Natural killer cell (primary cell): ENCODE measurements at regions of chr19 and their contacts with region 1.

Region 1: DNA sequence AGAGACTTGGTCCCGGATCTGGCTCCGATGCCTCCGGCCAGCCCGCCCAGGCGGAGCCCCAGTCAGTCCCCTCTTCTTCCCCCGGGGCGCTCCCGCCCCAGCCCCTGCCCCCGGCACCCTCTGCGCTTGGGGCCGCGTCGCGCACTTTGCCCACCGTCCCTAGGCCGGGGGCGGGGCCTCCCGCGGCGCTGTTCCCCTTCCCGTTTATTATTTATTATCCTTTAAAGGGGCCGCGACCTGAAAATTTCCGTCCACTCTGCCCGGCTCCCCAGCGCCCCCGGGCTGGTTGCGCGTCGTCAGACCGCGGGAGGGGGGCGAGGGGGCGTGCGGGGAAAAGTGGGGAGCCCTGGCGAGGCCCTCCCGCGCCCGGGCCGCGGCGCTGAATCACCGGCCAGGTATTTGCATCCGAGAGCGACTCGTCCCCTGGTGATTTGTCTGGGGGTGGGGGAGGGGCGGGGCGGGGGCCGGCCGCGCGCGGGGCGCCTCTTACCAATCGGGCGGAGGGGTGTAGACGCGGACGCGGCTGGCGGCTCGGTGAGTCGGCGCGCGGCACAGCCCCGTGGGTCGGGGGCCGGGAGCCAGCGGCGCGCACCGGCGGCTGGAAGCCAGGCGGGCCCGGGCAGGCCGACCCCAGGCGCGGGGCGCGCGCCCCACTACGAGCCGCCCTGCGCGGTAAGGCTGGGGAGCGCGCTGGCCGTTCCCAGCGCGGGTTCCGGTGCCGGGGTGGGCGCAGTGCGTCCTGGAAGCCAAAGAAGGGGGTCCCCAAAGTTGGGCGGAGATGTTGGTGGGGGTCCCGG is at the start of gene ARID3A:
- DNase-seq: peak; percentile 79 to 85
- ATAC-seq: peak; percentile 66 to 85 (median 78)
- H3K4me3 ChIP-seq: peak within 1 kb of the TSS; percentile 97
- H3K4me3 Mint-ChIP-seq: peak within 1 kb of the TSS; percentile 88
- H3K27ac ChIP-seq: peak within 1 kb of the TSS; percentile 95
- H3K27ac Mint-ChIP-seq: peak within 1 kb of the TSS; percentile 58 to 85
- H3K4me1 ChIP-seq: peaks cover 44% of the 10 kb centered on the region
- H3K4me1 Mint-ChIP-seq: peaks cover 10 to 12% of the 10 kb centered on the region in 2 donors
- H3K27me3 ChIP-seq: peaks cover 3% of the 10 kb centered on the region
- H3K27me3 Mint-ChIP-seq: no peaks in the 10 kb centered on the region
- CTCF ChIP-seq: no peak
- total RNA-seq, gene ARID3A: 15.9 to 24.6 (median 24.2) TPM

Region 2: GRCh38 chr19:860481-861101 is 65.1 kb before region 1 on chr19:
- intact Hi-C with region 1: loop called (anchors 1 kb)
- DNase-seq: peak; percentile 43 to 84
- ATAC-seq: peak; percentile 35 to 47 (median 43)
- H3K4me3 ChIP-seq: no peak overlapping the region
- H3K4me3 Mint-ChIP-seq: peak overlapping the region; percentile 28
- H3K27ac ChIP-seq: no peak overlapping the region
- H3K27ac Mint-ChIP-seq: no peak overlapping the region
- H3K4me1 ChIP-seq: peaks cover 43% of the 10 kb centered on the region
- H3K4me1 Mint-ChIP-seq: peaks cover 12 to 21% of the 10 kb centered on the region in 2 donors
- H3K27me3 ChIP-seq: peaks cover 7% of the 10 kb centered on the region
- H3K27me3 Mint-ChIP-seq: peaks cover 7 to 15% of the 10 kb centered on the region in 2 donors
- CTCF ChIP-seq: no peak

Region 3: DNA sequence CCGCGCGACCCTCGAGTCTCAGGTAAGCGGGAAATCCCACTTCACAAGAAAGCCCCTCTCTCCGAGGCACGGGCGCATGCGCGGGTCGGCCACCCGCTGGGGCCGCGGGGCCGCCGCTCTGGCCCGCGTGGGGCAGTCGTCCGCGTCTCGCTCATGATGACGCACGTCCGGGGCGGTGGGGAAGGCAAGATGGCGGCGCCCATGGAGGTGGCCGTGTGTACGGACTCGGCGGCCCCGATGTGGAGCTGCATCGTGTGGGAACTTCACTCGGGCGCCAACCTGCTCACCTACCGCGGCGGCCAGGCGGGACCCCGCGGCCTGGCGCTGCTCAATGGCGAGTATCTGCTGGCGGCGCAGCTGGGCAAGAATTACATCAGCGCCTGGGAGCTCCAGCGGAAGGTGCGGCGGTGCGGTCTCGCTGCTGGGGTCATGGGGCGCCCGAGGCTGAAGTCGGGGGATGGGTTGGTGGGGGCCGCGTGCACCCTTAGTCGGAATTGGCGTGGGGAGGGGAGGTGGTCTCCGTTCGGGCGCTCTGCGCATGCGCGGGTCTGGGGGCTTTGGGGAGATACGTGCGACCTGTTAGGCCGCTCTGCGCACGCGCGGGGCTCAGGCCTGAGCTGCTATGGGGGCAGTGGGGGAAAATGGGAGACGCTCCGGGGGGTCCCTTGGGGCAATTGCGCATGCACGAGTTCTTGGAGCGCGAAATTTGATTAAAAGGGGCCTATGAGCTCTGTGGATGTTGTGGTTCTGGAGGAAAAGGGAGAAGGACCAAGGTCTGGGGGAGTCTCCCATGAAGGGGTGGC is 58.6 kb after region 1 on chr19 and contains the start of gene WDR18:
- intact Hi-C with region 1: loop called (anchors 1 kb)
- DNase-seq: peak; percentile 90 to 94
- ATAC-seq: peak; percentile 92 to 94 (median 93)
- H3K4me3 ChIP-seq: peak within 1 kb of the TSS; percentile 97
- H3K4me3 Mint-ChIP-seq: peak within 1 kb of the TSS; percentile 97
- H3K27ac ChIP-seq: peak within 1 kb of the TSS; percentile 88
- H3K27ac Mint-ChIP-seq: peak within 1 kb of the TSS; percentile 83 to 94
- H3K4me1 ChIP-seq: peaks cover 39% of the 10 kb centered on the region
- H3K4me1 Mint-ChIP-seq: peaks cover 13 to 22% of the 10 kb centered on the region in 2 donors
- H3K27me3 ChIP-seq: no peaks in the 10 kb centered on the region
- H3K27me3 Mint-ChIP-seq: no peaks in the 10 kb centered on the region
- CTCF ChIP-seq: no peak
- total RNA-seq, gene WDR18: 17.5 to 25.4 (median 22.7) TPM

Region 4: DNA sequence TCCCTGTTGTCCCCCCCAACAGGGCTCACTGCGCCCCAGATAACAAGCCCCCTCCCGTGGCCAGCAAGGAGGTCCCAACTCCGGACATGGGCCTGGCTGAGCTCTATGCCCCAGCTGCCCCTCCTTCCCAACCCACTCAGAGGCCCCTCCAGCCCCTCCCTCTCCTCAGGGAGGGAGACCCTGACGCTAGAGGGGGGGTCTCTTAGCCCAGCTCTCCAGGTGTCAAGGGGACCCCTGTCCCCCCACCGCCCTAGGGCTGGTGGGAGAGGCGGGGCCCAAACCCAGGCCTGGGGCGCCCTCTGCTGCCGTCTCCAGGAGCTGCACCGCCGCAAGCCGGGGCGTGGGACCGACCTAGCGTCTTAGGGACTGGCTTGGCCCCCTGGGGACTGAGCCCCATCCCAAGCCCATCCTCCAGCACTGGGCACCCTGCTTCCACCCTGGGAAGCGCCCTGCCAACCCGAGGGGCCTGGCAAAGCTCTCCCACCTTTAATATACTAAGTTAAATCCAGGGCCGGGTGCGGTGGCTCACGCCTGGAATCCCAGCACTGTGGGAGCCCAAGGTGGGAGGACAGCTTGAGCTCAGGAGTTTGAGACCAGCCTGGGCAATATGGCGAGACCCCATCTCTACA is 75.9 kb after region 1 on chr19:
- intact Hi-C with region 1: loop called (anchors 1 kb)
- DNase-seq: peak; percentile 77 to 78
- ATAC-seq: peak; percentile 81 to 85 (median 81)
- H3K4me3 ChIP-seq: no peak overlapping the region
- H3K4me3 Mint-ChIP-seq: no peak overlapping the region
- H3K27ac ChIP-seq: no peak overlapping the region
- H3K27ac Mint-ChIP-seq: peak overlapping the region in 1 of 2 donors; percentile 16
- H3K4me1 ChIP-seq: peaks cover 23% of the 10 kb centered on the region
- H3K4me1 Mint-ChIP-seq: peaks cover 0 to 10% of the 10 kb centered on the region in 2 donors
- H3K27me3 ChIP-seq: peaks cover 28% of the 10 kb centered on the region
- H3K27me3 Mint-ChIP-seq: peaks cover 16 to 22% of the 10 kb centered on the region in 2 donors
- CTCF ChIP-seq: peak; percentile 94

Region 5: GRCh38 chr19:1249298-1249989 is 323.7 kb after region 1 on chr19:
- intact Hi-C with region 1: loop called (anchors 10 kb)
- DNase-seq: peak; percentile 92 to 98
- ATAC-seq: peak; percentile 45 to 76 (median 57)
- H3K4me3 ChIP-seq: peak overlapping the region; percentile 88
- H3K4me3 Mint-ChIP-seq: peak overlapping the region; percentile 91
- H3K27ac ChIP-seq: peak overlapping the region; percentile 93
- H3K27ac Mint-ChIP-seq: peak overlapping the region; percentile 88 to 97
- H3K4me1 ChIP-seq: peaks cover 48% of the 10 kb centered on the region
- H3K4me1 Mint-ChIP-seq: peaks cover 3 to 25% of the 10 kb centered on the region in 2 donors
- H3K27me3 ChIP-seq: no peaks in the 10 kb centered on the region
- H3K27me3 Mint-ChIP-seq: no peaks in the 10 kb centered on the region
- CTCF ChIP-seq: no peak